Thyroid gland (tissue), 4 donors: ENCODE measurements at regions of chr1 and their contacts with region 1.

Region 1: GRCh38 chr1:28518000-28518744 is 12.3 kb downstream of the RCC1 start:
- DNase-seq: peak; percentile 90 to 93
- H3K4me3 ChIP-seq: peak overlapping the region in 2 of 3 donors; percentile 51 to 58
- H3K27ac ChIP-seq: peak overlapping the region in 2 of 3 donors; percentile 29 to 77
- H3K4me1 ChIP-seq: peaks cover 7 to 12% of the 10 kb centered on the region in 2 donors
- H3K27me3 ChIP-seq: no peaks in the 10 kb centered on the region
- CTCF ChIP-seq: peak; percentile 91 to 100 (median 97)
- POLR2A ChIP-seq: peak in 1 of 2 donors; percentile 72

Region 2: DNA sequence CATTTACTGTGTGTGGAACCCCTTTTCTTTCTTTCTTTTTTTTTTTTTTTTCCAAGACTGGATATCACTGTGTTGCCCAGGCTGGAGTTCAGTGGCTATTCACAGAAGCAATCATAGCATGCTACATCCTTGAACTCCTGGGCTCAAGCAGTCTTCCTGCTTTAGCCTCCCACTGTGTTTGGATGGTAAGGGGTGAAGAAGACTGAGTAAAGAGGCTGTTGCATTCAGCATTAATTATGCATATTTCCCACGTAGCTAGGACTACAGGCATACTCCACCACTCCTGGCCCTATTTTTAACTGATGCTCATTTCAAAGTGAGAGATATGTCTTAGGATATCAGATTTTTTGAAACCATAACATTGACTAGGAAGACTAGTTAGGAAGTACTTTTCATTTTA is 109.1 kb before region 1 on chr1:
- intact Hi-C with region 1: loop called (anchors 5 kb)
- DNase-seq: no peak
- H3K4me3 ChIP-seq: no peak overlapping the region
- H3K27ac ChIP-seq: no peak overlapping the region
- H3K4me1 ChIP-seq: peaks cover 11 to 14% of the 10 kb centered on the region in 2 donors
- H3K27me3 ChIP-seq: no peaks in the 10 kb centered on the region
- CTCF ChIP-seq: no peak
- POLR2A ChIP-seq: no peak

Region 3: DNA sequence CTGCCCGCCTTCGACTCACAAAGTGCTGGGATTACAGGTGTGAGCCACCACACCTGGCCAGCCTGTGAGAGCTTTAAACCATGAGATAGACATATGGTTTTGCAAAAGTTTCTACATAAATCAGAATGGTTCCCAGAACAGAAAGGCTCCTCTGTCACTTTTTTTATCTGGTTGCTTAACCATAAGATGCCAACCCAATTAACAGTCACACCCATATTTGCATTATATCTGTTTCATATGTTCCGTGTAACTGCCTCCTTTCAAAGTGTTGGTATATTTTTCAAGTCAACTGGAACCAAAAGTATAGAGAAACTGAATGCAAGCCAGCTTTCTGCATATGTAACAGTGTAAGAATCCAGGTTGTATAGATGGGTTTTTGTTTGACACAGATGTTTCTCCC is 36.0 kb before region 1 on chr1:
- intact Hi-C with region 1: no loop called
- DNase-seq: no peak
- H3K4me3 ChIP-seq: no peak overlapping the region
- H3K27ac ChIP-seq: no peak overlapping the region
- H3K4me1 ChIP-seq: peaks cover 3 to 12% of the 10 kb centered on the region in 2 donors
- H3K27me3 ChIP-seq: no peaks in the 10 kb centered on the region
- CTCF ChIP-seq: no peak
- POLR2A ChIP-seq: no peak